WTC11 (cell line): ENCODE measurements at regions of chr1 and their contacts with region 1.

Region 1: GRCh38 chr1:205458777-205459566 is 3.1 kb upstream of the BLACAT1 start:
- DNase-seq: peak; percentile 79
- ATAC-seq: peak; percentile 16; the same call in 1 of the 2 replicates
- H3K4me3 Mint-ChIP-seq: no peak overlapping the region
- H3K27ac Mint-ChIP-seq: no peak overlapping the region
- H3K4me1 Mint-ChIP-seq: peaks cover 23% of the 10 kb centered on the region
- H3K27me3 Mint-ChIP-seq: peaks cover 4% of the 10 kb centered on the region
- CTCF ChIP-seq: no peak

Region 2: DNA sequence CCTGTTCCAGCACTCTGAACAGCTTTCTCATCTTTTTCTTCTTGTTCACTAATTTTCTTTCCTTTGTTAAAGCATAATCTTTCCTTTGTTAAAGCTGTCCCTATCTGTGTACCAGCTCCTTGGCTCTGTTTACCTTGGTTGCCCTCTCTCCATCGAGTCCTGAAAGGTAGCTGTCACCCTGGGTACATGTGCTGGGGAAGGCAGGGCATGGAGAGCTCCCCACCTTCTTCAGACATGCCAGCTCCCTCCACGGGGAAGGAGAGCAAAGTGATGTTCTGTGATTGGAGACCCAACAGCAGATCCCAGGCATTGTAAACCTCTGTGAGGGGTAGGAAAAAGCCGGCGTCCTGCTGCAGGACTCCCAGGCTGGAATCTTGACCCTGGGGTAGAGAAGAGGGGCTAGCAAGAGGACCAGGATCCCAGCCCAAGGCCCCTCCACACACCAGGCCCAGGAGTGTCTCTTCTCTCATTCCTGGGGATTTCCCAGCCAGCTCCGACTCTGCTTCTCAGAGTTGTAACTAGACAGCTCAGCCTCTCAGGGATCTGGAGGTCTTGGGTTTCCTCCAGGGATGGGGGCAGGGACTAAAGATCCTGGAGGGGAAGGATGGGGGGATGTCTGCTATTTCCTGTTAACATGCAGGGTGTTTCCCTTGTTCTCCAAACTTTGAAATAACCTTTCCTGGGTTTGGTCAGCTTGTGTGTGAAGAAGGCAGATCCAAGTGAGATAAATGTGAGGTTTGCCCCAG is 196.9 kb before region 1 on chr1:
- CTCF ChIA-PET with region 1: no interaction called
- POLR2A ChIA-PET with region 1: no interaction called
- DNase-seq: no peak
- ATAC-seq: peak; percentile 60
- H3K4me3 Mint-ChIP-seq: no peak overlapping the region
- H3K27ac Mint-ChIP-seq: peak overlapping the region; percentile 50
- H3K4me1 Mint-ChIP-seq: peaks cover 37% of the 10 kb centered on the region
- H3K27me3 Mint-ChIP-seq: no peaks in the 10 kb centered on the region
- CTCF ChIP-seq: no peak

Region 3: GRCh38 chr1:205396967-205397616 is 61.9 kb before region 1 on chr1:
- CTCF ChIA-PET with region 1: interaction called, 11 read pairs
- POLR2A ChIA-PET with region 1: interaction called, 3 read pairs
- DNase-seq: peak; percentile 41
- ATAC-seq: peak; percentile 93
- H3K4me3 Mint-ChIP-seq: no peak overlapping the region
- H3K27ac Mint-ChIP-seq: no peak overlapping the region
- H3K4me1 Mint-ChIP-seq: peaks cover 6% of the 10 kb centered on the region
- H3K27me3 Mint-ChIP-seq: peaks cover 13% of the 10 kb centered on the region
- CTCF ChIP-seq: peak; percentile 71

Region 4: DNA sequence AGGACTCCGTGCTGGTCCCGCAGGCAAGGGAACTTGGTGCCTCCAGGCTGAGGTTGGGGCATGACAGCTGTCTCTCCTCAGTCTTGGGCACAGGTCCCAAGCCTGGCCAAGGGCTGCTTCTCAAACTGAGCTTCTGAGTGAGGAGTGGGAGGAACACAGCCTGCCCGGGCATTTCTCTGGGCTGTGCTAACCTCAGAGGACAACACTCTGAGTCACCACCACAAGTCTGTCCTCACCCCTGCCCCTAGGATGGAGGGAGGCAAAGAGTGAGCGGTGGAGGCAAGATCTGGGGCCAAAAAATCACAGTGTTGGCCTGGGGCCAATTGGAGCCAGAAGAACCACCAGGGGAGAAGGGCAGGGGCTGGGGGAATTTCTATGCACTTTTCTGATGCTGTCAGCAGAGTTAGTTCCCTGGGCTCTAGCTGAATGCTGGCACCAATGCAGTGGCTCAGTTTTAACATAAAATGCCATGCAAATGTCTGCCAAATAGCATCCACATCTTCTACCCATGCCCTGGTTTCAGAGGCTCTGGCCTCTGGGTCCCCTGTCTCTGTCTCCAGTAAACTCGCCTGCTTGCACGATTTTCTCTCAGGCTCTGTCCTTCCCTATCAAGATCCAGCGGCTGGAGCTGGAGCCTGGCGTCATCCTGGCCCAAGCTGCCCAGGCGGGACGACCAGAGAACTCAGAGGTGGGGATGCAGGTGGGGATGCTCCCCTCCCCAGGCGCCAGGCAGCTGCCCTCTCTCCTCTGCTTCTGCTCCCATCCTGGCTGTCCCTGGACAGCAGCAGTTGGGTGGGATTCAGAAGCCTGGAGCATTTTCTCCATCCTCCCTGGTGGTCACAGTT is 34.5 kb after region 1 on chr1:
- CTCF ChIA-PET with region 1: interaction called, 11 read pairs
- POLR2A ChIA-PET with region 1: interaction called, 3 read pairs
- DNase-seq: no peak
- ATAC-seq: no peak
- H3K4me3 Mint-ChIP-seq: no peak overlapping the region
- H3K27ac Mint-ChIP-seq: no peak overlapping the region
- H3K4me1 Mint-ChIP-seq: peaks cover 43% of the 10 kb centered on the region
- H3K27me3 Mint-ChIP-seq: peaks cover 24% of the 10 kb centered on the region
- CTCF ChIP-seq: no peak